ENCODE measurements at regions of chr4 and their contacts with region 1.

Region 1: GRCh38 chr4:73341454-73341853 is 62.6 kb upstream of the ALB start:
- H3K4me3 ChIP-seq: no peak overlapping the region
- H3K27ac ChIP-seq: no peak overlapping the region
- H3K4me1 ChIP-seq: no peaks in the 10 kb centered on the region
- CTCF ChIP-seq: no peak

Region 2: GRCh38 chr4:73376976-73377375 is 35.5 kb after region 1 on chr4:
- CTCF ChIA-PET with region 1: no interaction called
- POLR2A ChIA-PET with region 1: no interaction called
- H3K4me3 ChIP-seq: no peak overlapping the region
- H3K27ac ChIP-seq: no peak overlapping the region
- H3K4me1 ChIP-seq: no peaks in the 10 kb centered on the region
- CTCF ChIP-seq: no peak

Region 3: GRCh38 chr4:73446336-73446938 is 105.0 kb after region 1 on chr4:
- CTCF ChIA-PET with region 1: interaction called, 19 read pairs
- POLR2A ChIA-PET with region 1: no interaction called
- H3K4me3 ChIP-seq: no peak overlapping the region
- H3K27ac ChIP-seq: no peak overlapping the region
- H3K4me1 ChIP-seq: no peaks in the 10 kb centered on the region
- CTCF ChIP-seq: 0 out of 2 replicates have a peak, but pooled peaks have one; percentile 16

Region 4: DNA sequence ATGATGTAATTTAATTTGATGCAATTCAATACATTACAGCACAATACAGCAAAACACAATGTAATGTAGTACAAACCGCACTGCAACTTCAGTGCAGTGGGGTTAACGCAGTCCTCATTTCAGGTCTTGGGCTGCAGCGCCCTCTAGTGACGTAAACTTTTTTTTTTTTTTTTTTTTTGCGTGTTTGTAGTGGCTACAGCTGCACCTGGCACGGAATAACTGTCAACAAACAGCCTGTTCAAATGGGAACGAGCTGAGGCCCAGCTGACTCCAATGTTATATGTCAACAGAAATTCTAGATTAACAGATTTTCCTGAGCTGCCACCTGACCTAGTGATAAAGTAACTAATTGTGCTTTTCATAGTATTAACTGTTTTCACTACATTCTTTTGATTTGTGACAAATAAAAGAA is 312.2 kb after region 1 on chr4:
- CTCF ChIA-PET with region 1: interaction called, 25 read pairs
- POLR2A ChIA-PET with region 1: no interaction called
- H3K4me3 ChIP-seq: no peak overlapping the region
- H3K27ac ChIP-seq: no peak overlapping the region
- H3K4me1 ChIP-seq: no peaks in the 10 kb centered on the region
- CTCF ChIP-seq: peak; percentile 56; the same call in 1 of the 2 replicates

Region 5: DNA sequence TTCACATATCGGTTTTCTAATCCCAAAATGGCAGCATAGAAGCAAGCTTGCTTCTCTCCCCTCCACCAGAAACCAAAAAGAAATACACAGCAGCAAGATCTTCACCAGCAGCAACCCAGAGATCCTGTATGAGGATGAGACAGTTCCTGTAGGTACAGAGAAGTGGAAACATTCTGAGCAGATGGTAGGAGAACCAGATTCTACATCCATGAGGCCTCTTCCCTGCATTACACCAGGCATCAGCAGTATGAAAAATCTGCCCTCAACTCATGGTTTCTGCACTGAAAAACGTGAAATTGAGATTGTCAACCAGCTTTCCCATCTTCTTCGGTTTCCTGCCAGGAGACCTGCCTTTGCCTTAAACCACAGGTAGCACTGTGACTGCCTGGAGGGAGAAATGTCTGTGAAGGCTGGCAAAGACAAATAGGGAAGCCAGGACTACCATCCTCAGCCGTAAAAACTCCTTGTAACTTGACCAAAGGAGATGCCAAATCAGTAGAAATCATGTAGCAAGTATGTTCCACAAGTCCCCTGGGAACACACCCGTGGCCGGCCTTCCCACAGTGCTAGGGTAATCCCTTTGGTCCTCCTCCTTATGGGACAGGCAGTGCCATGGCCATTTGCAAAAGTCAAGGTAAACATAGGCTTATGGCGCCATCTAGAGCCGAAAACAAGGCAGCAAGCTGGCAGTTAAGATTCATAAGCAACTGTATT is 792.5 kb after region 1 on chr4:
- CTCF ChIA-PET with region 1: interaction called, 10 read pairs
- POLR2A ChIA-PET with region 1: no interaction called
- H3K4me3 ChIP-seq: no peak overlapping the region
- H3K27ac ChIP-seq: no peak overlapping the region
- H3K4me1 ChIP-seq: no peaks in the 10 kb centered on the region
- CTCF ChIP-seq: peak; percentile 29; the same call in 1 of the 2 replicates

Measured in HEK293 (cell line).